B cell (primary cell): ENCODE measurements at regions of chr11 and their contacts with region 1.

Region 1: DNA sequence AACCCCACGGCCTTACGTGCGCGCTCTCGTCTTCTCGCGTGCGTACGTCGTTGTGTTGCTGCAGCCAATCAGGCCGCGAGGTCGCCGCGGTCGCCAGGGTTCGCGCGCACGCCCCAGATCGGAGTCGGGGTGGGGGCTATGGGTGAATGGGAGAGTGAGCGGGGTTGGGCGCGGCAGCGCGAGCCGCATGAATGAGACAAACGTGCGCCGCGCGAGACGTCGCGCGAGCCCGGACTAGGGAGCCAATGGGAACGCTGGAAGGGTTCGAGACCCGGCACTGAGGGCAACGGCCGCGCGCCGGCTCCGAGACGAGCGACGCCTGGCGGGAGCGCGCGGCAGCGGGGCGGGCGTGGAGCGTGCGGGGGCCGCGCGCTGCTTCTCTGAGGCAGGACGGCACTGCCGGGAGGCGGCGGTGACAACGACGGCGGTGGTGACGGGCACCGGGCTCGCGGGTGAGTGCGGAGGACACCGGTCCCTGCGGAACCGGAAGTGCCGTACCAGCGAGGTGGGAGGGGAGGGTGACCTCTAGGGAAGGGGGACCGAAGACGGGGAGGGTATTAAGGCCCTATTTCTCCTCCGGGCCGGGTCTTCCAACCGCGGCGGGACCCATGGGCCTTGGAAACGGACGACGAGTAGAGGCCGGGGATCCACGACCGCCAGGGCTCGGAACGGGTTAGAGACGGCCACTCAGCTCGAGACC is at the start of gene ZDHHC5:
- DNase-seq: peak; percentile 100
- ATAC-seq: peak; percentile 78
- H3K4me3 ChIP-seq: peak within 1 kb of the TSS; percentile 72 to 96 (median 83)
- H3K4me3 Mint-ChIP-seq: peak within 1 kb of the TSS; percentile 95
- H3K27ac ChIP-seq: peak within 1 kb of the TSS; percentile 98 to 99
- H3K27ac Mint-ChIP-seq: peak within 1 kb of the TSS; percentile 100
- H3K4me1 ChIP-seq: peaks cover 25% of the 10 kb centered on the region in 2 donors
- H3K4me1 Mint-ChIP-seq: peaks cover 50% of the 10 kb centered on the region
- H3K27me3 ChIP-seq: no peaks in the 10 kb centered on the region
- H3K27me3 Mint-ChIP-seq: no peaks in the 10 kb centered on the region
- CTCF ChIP-seq: peak; percentile 55
- total RNA-seq, gene ZDHHC5: 53.8 and 56.2 TPM in 2 replicates

Region 2: GRCh38 chr11:57324886-57325734 is 342.8 kb before region 1 on chr11 and contains the start of gene TNKS1BP1:
- CTCF ChIA-PET with region 1: interaction called, 3 read pairs
- POLR2A ChIA-PET with region 1: interaction called, 3 read pairs
- intact Hi-C with region 1: loop called (anchors 1 kb)
- DNase-seq: peak; percentile 93
- ATAC-seq: peak; percentile 88
- H3K4me3 ChIP-seq: peak within 1 kb of the TSS; percentile 43 to 83 (median 75)
- H3K4me3 Mint-ChIP-seq: peak within 1 kb of the TSS; percentile 95
- H3K27ac ChIP-seq: peak within 1 kb of the TSS; percentile 78 to 79
- H3K27ac Mint-ChIP-seq: peak within 1 kb of the TSS; percentile 94
- H3K4me1 ChIP-seq: peaks cover 13 to 20% of the 10 kb centered on the region in 2 donors
- H3K4me1 Mint-ChIP-seq: peaks cover 28% of the 10 kb centered on the region
- H3K27me3 ChIP-seq: no peaks in the 10 kb centered on the region
- H3K27me3 Mint-ChIP-seq: no peaks in the 10 kb centered on the region
- CTCF ChIP-seq: no peak
- total RNA-seq, gene TNKS1BP1: 8.1 and 12.2 TPM in 2 replicates

Region 3: DNA sequence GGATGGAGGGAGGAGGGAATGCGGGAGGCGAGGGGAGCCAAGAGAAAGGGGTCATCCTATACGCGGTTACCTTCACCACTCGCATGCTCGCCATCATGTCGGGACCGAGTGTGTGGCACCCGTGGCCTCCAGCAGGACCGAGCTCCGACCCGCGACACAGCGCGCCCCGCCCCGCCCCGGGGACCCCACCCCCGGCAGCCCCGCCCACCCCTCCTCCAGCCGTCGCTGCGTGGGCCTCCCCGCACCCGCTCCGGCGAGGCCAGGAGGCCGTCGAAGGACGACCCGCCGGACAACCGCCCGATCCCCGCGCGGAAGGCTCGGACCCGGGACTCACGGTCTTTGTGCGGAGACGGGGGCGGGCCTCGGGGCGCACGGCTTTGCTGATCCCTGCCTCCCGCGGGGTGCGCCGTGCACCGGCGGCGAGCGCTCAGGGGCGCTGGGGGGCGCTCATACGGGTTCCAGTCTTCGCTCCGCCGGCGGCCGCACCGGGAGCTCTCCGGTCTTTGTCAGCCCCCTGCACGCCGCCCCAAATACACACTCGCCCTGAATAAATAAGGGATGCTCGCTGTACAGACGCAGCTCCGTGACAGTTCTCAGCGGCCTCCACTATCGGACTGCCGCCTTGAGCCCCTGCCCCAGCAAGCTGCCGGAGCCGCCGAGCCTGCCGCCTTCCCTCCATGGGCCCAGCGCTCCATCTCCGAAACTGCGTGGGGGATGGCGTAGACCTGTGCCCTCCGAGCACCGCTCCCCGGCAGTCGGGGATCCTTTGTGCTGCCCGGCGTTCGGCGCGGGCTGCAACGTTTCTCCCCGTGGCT is 100.2 kb before region 1 on chr11 and contains the start of gene UBE2L6:
- CTCF ChIA-PET with region 1: interaction called, 6 read pairs
- POLR2A ChIA-PET with region 1: no interaction called
- intact Hi-C with region 1: loop called (anchors 1 kb)
- DNase-seq: peak; percentile 82
- ATAC-seq: peak; percentile 69
- H3K4me3 ChIP-seq: peak within 1 kb of the TSS; percentile 83 to 99 (median 98)
- H3K4me3 Mint-ChIP-seq: peak within 1 kb of the TSS; percentile 99
- H3K27ac ChIP-seq: peak within 1 kb of the TSS; percentile 83 to 92
- H3K27ac Mint-ChIP-seq: peak within 1 kb of the TSS; percentile 99
- H3K4me1 ChIP-seq: peaks cover 18 to 26% of the 10 kb centered on the region in 2 donors
- H3K4me1 Mint-ChIP-seq: peaks cover 36% of the 10 kb centered on the region
- H3K27me3 ChIP-seq: no peaks in the 10 kb centered on the region
- H3K27me3 Mint-ChIP-seq: no peaks in the 10 kb centered on the region
- CTCF ChIP-seq: peak; percentile 95
- total RNA-seq, gene UBE2L6: 66.3 and 70.7 TPM in 2 replicates

Region 4: GRCh38 chr11:57712256-57713150 is 44.6 kb after region 1 on chr11 and contains the start of gene TMX2:
- CTCF ChIA-PET with region 1: interaction called, 3 read pairs
- POLR2A ChIA-PET with region 1: no interaction called
- intact Hi-C with region 1: loop called (anchors 1 kb)
- DNase-seq: peak; percentile 96
- ATAC-seq: peak; percentile 86
- H3K4me3 ChIP-seq: peak within 1 kb of the TSS; percentile 78 to 100 (median 93)
- H3K4me3 Mint-ChIP-seq: peak within 1 kb of the TSS; percentile 99
- H3K27ac ChIP-seq: peak within 1 kb of the TSS; percentile 70 to 96
- H3K27ac Mint-ChIP-seq: peak within 1 kb of the TSS; percentile 94
- H3K4me1 ChIP-seq: peaks cover 21 to 28% of the 10 kb centered on the region in 2 donors
- H3K4me1 Mint-ChIP-seq: peaks cover 42% of the 10 kb centered on the region
- H3K27me3 ChIP-seq: no peaks in the 10 kb centered on the region
- H3K27me3 Mint-ChIP-seq: no peaks in the 10 kb centered on the region
- CTCF ChIP-seq: no peak
- total RNA-seq, gene TMX2: 58.8 and 60.2 TPM in 2 replicates

Region 5: DNA sequence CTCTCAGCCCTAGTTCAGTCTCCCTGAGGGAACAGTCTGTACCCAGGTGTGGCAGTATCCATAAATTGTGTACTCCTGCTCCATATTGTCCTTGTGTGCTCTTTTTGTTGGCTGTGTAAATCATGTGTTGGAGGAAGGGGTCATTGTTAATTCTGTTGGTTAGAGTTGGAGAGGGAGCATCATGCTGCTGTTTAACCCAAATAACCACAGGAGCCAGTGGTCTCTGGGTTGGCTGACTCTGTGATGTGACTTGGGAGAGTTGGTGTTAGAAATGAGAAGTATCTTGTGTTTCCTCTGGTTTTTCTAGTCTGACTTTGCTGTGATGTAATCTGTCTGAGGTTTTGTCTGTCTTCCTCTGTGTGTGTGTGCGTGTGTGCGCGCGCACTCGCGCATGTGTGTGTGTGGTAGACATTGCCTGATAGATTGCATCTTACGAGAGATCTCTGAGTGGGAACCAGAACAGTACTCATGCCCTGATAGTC is 124.2 kb after region 1 on chr11:
- CTCF ChIA-PET with region 1: interaction called, 3 read pairs
- POLR2A ChIA-PET with region 1: no interaction called
- intact Hi-C with region 1: loop called (anchors 2 kb)
- DNase-seq: peak; percentile 94
- ATAC-seq: peak; percentile 89
- H3K4me3 ChIP-seq: peak overlapping the region; percentile 15 to 62 (median 36)
- H3K4me3 Mint-ChIP-seq: peak overlapping the region; percentile 80
- H3K27ac ChIP-seq: peak overlapping the region; percentile 87 to 97
- H3K27ac Mint-ChIP-seq: peak overlapping the region; percentile 93
- H3K4me1 ChIP-seq: peaks cover 53 to 57% of the 10 kb centered on the region in 2 donors
- H3K4me1 Mint-ChIP-seq: peaks cover 56% of the 10 kb centered on the region
- H3K27me3 ChIP-seq: no peaks in the 10 kb centered on the region
- H3K27me3 Mint-ChIP-seq: no peaks in the 10 kb centered on the region
- CTCF ChIP-seq: no peak

Region 6: GRCh38 chr11:59142530-59143507 is 1474.9 kb after region 1 on chr11 and contains the start of gene FAM111A:
- CTCF ChIA-PET with region 1: no interaction called
- POLR2A ChIA-PET with region 1: no interaction called
- intact Hi-C with region 1: loop called (anchors 5 kb)
- DNase-seq: peak; percentile 91
- ATAC-seq: peak; percentile 74
- H3K4me3 ChIP-seq: peak within 1 kb of the TSS; percentile 82 to 94 (median 89)
- H3K4me3 Mint-ChIP-seq: peak within 1 kb of the TSS; percentile 97
- H3K27ac ChIP-seq: peak within 1 kb of the TSS; percentile 88 to 90
- H3K27ac Mint-ChIP-seq: peak within 1 kb of the TSS; percentile 87
- H3K4me1 ChIP-seq: peaks cover 40 to 45% of the 10 kb centered on the region in 2 donors
- H3K4me1 Mint-ChIP-seq: peaks cover 68% of the 10 kb centered on the region
- H3K27me3 ChIP-seq: no peaks in the 10 kb centered on the region
- H3K27me3 Mint-ChIP-seq: no peaks in the 10 kb centered on the region
- CTCF ChIP-seq: no peak
- total RNA-seq, gene FAM111A: 120 and 126 TPM in 2 replicates